Heart left ventricle (tissue), 16 donors: ENCODE measurements at regions of chr20 and their contacts with region 1.

Region 1: GRCh38 chr20:58196008-58196820 is 32.2 kb downstream of the ANKRD60 start:
- DNase-seq: no peak
- ATAC-seq: no peak
- H3K4me3 ChIP-seq: no peak overlapping the region
- H3K27ac ChIP-seq: no peak overlapping the region
- H3K4me1 ChIP-seq: no peaks in the 10 kb centered on the region
- H3K27me3 ChIP-seq: peaks cover 0 to 10% (median 0%) of the 10 kb centered on the region in 9 donors
- CTCF ChIP-seq: no peak
- POLR2A ChIP-seq: no peak

Region 2: DNA sequence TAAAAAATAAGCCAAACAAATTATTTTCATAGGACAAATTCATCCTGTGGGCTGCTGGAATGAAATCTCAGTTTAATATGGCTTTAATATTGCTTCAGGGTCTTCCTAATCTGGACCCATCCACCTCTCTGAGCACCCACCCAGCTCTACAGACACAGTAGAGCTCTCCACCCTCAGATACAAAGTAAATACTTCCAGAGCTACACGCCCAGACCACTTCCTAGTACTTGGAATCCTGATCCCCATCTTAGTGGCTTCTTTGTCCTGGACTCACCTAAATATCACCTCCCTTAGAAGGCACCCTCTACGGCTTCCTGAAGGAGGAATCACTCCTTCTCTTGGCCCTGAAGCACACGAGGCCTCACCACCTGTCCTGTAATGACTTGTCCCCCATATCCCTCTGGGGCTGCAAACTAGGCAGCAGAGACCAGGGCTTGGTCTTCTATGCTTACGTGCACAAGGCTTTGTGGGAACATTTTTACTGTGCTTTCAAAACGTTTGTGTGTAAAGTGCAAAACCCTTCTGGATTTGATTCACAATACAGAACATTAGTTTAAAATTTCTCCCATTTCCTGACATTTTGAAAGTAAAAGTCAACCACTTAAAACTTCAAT is 673.7 kb before region 1 on chr20:
- intact Hi-C with region 1: loop called in 1 of 10 experiments (anchors 5 kb)
- DNase-seq: no peak
- ATAC-seq: no peak
- H3K4me3 ChIP-seq: no peak overlapping the region
- H3K27ac ChIP-seq: no peak overlapping the region
- H3K4me1 ChIP-seq: no peaks in the 10 kb centered on the region
- H3K27me3 ChIP-seq: peaks cover 0 to 5% (median 0%) of the 10 kb centered on the region in 9 donors
- CTCF ChIP-seq: no peak
- POLR2A ChIP-seq: no peak

Region 3: DNA sequence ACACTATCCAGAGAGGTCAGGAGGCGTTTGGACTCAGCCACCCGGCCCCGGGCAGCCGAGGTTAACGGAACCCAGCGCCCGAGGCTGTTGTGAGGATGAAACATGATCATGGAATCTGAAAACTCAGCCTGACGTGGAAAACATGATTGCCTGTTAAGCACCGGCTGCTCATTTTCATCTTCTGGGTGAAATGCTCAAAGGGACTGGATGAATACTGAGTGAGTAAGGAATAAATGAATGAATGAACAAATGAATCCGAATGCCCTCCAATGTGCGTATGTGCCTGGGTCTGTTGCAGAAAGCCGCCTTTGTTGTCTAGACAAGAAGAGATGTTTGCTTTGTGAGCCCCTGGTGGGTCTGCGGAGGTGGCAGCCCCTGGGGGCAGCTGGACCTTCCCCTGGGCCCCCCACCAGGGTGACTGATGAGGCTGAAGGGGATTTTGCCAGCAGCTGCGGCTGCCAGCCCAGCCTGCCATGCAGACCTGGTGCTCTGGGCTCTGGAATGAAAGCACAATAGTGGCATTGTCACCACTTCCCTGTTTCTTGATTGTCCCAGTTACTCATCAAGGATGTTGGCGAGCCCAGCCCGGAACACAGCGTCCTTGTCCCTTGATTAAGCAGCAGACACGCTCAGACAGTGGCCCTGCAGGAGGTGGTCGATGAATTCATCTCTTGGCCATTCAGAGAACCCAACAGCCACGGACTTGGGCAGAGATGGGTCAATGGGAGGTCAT is 178.8 kb before region 1 on chr20:
- intact Hi-C with region 1: no loop called
- DNase-seq: peak in 2 of 5 donors; percentile 7 to 54
- ATAC-seq: peak in 3 of 4 donors; percentile 12 to 34 (median 31)
- H3K4me3 ChIP-seq: no peak overlapping the region
- H3K27ac ChIP-seq: peak overlapping the region in 1 of 12 donors; percentile 38
- H3K4me1 ChIP-seq: peaks cover 0 to 30% (median 16%) of the 10 kb centered on the region in 12 donors
- H3K27me3 ChIP-seq: no peaks in the 10 kb centered on the region
- CTCF ChIP-seq: no peak
- POLR2A ChIP-seq: no peak

Region 4: DNA sequence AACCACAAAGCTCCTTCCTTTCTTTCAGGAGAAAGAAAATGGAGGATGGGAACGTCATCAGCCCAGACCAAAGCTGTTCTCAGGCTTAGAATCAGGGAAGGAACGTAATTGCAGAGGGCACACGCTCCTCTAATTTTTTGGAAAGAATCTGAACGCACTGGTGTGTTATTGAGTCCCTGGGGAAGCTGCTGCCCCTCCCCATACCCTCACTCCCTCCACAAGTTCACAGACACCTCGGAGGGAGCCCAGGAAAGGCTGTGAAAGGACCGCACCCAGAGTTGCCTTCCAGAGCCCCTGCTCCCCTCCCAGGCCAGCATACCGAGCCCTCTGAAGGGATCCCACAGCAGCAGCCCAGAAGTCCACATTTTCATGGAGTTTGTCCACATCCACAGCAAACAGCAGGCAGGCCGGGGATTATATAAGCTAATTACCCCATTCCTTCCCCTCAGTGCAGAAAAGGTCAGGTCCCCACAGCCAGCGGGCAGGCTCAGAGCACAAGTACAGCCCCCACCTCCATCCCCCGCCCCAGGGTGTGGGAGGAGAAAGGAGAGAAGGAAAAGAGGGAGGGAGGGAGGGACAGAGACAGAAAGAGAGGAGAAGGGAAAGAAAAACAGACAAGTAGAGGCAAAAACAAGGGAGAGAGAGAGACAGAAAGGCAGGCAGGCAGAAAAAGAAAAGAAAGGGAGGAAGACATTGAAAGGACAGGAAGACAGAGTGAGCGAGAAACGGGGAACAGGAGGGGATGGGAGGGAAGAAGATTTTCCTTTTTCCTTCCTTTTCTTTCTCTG is 21.3 kb before region 1 on chr20:
- intact Hi-C with region 1: no loop called
- DNase-seq: peak; percentile 59 to 77 (median 72)
- ATAC-seq: peak; percentile 71 to 81 (median 72)
- H3K4me3 ChIP-seq: peak overlapping the region in 10 of 12 donors; percentile 10 to 48 (median 31)
- H3K27ac ChIP-seq: peak overlapping the region; percentile 33 to 87 (median 71)
- H3K4me1 ChIP-seq: peaks cover 0 to 30% (median 12%) of the 10 kb centered on the region in 12 donors
- H3K27me3 ChIP-seq: peaks cover 0 to 6% (median 0%) of the 10 kb centered on the region in 9 donors
- CTCF ChIP-seq: no peak
- POLR2A ChIP-seq: no peak